ENCODE measurements at regions of chr2 and their contacts with region 1.

Region 1: DNA sequence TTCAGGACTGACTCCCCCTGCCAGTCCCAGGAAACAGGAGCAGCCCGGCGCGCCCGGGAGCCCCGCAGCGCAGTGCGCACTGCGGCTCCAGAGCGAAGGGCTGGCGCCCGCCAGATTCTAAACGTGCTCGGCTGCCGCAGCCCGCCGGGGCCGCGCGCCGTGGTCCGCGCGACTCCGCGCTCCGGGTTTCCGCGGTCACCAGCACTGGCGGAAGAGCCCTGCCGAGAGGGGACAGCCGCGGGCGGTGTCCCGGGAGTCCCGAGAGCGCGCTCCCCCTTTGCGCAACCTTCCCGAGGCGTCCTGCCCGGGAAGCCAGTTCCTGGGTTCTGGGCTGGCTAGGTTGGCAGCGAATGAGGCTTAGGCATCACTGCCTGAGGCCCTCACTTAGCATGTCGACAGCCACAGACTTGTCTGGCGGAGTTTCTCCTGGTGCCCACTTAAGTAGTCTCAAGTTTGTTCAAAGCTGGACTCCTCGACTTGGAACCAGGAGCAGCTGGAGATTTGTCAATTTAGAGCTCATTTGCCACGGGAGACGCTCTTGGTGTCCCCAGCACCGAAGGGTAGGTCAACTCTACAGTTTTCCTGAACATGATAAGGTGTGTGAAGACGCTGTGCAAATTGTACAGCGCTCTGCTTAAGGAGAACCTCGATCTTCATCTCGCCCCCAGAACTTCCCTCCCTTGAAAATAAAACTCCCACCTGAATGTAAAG is 1.5 kb upstream of the VSNL1 start:
- DNase-seq: peak; percentile 71
- ATAC-seq: peak; percentile 86 to 87

Region 2: GRCh38 chr2:17476830-17477229 is 62.2 kb before region 1 on chr2:
- intact Hi-C with region 1: loop called in 1 of 2 experiments (anchors 2 kb)
- DNase-seq: no peak
- ATAC-seq: peak; percentile 40 to 57

Region 3: DNA sequence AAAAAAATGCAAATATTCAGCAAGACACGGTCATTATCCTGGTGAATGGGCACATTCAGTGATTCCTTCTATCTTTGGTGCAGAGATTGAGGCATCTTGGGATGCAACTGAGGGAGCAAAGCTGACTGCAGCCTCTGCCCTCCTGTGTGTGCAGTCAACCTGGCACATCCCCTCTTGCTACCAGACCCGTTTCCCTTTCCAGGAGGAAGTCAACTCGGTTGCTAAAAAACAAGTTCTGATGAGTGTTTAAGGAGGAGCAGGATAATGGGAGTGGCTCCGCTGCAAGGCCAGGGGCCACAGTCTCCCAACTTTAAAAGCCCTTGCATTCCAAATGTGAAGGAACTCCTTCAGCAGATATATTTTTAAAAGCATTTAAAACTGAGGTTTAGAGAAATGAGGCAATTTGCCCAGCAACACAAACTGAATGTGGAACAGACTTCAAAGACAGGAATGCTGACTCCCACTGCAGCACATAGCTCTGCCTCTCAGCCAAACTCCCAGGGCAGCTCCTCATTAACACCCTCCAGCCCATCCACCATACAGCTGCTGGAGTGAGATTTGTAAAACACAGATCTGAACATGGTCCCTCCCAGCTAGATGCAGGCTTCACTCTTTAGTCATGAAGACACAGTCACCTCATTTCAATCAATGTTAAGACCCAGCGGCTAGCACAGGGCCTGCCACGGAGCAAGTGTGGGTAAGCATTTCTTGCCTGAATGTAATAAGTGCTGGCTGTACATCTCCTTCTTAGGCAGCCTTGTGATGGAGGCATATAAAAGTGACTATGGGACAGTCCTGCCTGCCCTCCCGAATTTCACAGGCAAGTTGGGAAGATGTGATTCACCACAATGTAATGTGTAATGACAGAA is 55.8 kb after region 1 on chr2:
- intact Hi-C with region 1: no loop called
- DNase-seq: no peak
- ATAC-seq: peak; percentile 86 to 92

Region 4: DNA sequence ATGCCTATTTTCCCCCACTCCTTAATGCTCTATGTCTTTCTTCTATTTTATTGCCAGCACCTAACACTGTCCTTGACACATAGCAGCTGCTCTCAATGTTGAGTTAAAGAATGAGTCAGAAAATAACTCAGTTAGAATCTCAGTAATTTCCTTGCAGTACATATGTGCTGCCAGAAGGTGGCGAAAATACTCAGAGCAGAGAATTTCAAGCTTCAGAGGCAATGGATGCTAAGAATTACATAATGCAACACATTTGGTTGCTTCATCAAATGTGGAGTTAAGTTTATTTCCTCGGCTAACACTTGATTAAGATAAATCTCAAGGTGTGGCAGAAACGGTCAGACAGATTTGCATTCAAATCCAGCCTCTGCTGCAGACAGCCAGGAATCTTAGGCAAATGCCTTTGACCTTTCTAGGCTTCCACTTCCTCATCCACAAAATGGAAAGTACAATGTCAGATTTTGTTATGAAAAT is 107.1 kb after region 1 on chr2:
- intact Hi-C with region 1: loop called in 1 of 2 experiments (anchors 5 kb)
- DNase-seq: no peak
- ATAC-seq: peak; percentile 54 to 65

Measured in left cardiac atrium (tissue), 4 donors.